Activated CD4-positive, alpha-beta T cell treated with anti-CD3 and anti-CD28 coated beads, Interleukin-2, amount 10 ng/mL, durations not matched to agents 24 days and 14 days (primary cell): ENCODE measurements at regions of chr1 and their contacts with region 1.

Region 1: DNA sequence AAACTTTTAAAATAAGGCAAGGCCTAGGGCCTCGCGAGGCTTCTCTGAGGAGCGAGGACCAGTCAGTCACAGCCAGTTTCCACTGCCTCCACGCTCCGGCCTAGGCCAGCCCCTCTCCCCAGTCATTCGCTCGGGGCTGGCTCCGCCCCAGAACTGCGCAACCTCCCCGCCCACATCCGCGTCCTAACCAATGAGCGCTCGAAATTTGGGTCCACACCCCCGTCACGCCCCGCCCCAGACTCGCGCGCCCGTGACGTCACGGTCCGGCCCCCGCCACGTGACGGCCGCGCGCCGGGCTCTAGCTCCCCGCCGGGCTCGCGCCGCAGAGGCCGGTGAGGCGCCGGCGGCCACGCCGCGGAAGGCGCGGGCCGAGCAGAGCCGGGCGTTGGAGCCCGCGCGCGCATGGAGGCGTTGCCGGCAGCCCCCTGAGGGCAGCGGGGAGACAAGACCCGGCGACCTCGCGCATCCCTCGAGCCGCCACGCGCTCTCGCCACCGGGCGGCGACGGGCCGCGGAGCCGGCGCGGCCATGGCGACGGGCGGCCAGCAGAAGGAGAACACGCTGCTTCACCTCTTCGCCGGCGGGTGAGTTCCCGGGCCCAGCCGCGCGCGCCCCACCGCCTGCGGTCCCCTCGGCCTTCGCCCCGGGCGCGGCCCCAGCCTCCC is at the start of gene SLC25A33:
- DNase-seq: peak; percentile 100
- H3K4me3 Mint-ChIP-seq: peak within 1 kb of the TSS; percentile 95
- H3K27ac Mint-ChIP-seq: peak within 1 kb of the TSS; percentile 87
- H3K4me1 Mint-ChIP-seq: peaks cover 30% of the 10 kb centered on the region
- H3K27me3 Mint-ChIP-seq: no peaks in the 10 kb centered on the region
- total RNA-seq, gene SLC25A33: 11.4 and 12.4 TPM in 2 replicates

Region 2: DNA sequence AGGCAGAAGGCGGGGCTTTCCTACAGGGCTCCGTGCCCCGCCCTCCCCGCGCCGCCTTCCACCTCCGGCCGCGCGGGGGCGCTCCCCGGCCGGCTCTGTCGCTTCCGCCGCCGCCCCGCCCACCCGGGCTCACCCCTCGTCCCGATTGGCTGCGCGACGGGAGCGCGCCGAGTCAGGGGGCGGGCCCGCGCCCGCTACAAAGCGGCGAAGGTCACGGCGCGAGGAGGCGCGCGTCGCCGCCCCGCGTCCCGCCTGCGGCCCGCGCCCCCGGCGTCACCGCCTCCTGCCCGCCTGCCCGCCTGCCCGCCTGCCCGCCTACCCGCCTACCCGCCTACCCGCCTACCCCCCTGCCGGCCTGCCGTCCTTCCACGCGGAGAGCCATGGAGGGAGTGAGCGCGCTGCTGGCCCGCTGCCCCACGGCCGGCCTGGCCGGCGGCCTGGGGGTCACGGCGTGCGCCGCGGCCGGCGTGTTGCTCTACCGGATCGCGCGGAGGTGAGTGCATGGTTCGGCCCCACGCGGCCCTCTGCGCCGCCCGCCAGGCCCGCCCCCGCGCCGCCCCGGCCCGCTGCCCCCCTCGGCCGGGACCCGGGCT is 49.4 kb after region 1 on chr1 and contains the start of gene TMEM201:
- intact Hi-C with region 1: loop called (anchors 1 kb)
- DNase-seq: peak; percentile 99
- H3K4me3 Mint-ChIP-seq: peak within 1 kb of the TSS; percentile 88
- H3K27ac Mint-ChIP-seq: peak within 1 kb of the TSS; percentile 71
- H3K4me1 Mint-ChIP-seq: peaks cover 21% of the 10 kb centered on the region
- H3K27me3 Mint-ChIP-seq: no peaks in the 10 kb centered on the region
- total RNA-seq, gene TMEM201: 35.9 and 37.3 TPM in 2 replicates

Region 3: GRCh38 chr1:9910425-9911178 is 371.3 kb after region 1 on chr1:
- intact Hi-C with region 1: loop called (anchors 1 kb)
- DNase-seq: peak; percentile 100
- H3K4me3 Mint-ChIP-seq: peak overlapping the region; percentile 97
- H3K27ac Mint-ChIP-seq: peak overlapping the region; percentile 98
- H3K4me1 Mint-ChIP-seq: peaks cover 29% of the 10 kb centered on the region
- H3K27me3 Mint-ChIP-seq: peaks cover 4% of the 10 kb centered on the region